ENCODE measurements at regions of chr3 and their contacts with region 1.

Region 1: DNA sequence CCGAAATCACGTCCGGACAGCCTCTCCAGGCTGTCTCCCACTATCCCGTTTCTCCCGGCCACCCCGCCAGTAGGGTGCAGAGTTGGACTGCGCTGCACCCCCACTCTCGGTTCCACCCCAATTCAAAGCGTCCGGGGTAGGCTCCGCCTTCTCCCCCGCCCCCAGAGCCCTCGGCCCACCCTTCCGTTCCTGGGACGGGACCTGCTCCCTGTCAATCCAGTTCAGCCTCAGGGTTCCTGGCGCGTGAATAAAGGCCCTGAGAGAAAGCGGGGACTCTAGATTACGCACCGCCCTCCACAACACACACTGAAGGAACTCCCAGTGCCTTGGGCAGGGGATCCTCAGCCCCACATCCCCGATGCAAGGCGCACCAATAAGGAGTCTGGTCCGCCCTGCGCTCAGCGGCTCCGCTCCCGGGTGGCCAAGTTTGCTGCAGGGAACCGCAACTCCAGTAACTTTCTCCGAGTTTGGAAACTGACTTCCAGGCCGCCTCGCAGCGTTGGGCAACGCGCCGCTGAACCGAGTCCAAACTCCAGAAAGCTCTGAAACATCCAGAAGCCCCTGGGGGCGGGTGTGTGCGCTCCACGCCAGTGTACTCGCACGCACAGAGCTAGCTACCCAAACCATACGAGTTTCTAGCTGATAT is 1.9 kb downstream of the ADAMTS9 start:
- DNase-seq: peak; percentile 93
- ATAC-seq: peak; percentile 93

Region 2: GRCh38 chr3:64612082-64612860 is 73.7 kb before region 1 on chr3:
- intact Hi-C with region 1: loop called (anchors 5 kb)
- DNase-seq: no peak
- ATAC-seq: peak; percentile 97

Region 3: GRCh38 chr3:64696896-64697295 is 11.0 kb after region 1 on chr3:
- intact Hi-C with region 1: no loop called
- DNase-seq: no peak
- ATAC-seq: no peak

Region 4: GRCh38 chr3:64901522-64901885 is 215.6 kb after region 1 on chr3:
- intact Hi-C with region 1: loop called (anchors 2 kb)
- DNase-seq: no peak
- ATAC-seq: peak; percentile 81

Region 5: DNA sequence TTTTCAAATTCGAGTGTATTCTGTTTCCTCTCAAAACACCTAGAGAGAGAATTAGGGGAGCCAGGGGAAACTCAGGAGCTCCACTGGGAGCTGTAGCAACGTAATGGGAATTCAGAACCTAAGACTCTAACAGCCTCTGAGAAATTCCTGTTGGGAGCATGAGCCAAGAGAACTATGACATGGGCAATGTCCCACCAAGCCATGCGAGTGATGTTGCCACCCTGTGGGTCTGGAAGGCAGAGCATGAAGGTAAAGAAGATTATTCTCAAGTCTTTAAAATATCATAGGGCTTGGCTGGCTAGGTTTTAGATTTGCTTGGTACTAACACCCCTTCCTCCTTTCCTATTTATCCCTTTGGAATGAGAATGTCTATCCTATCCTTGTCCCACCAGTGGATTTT is 394.5 kb after region 1 on chr3:
- intact Hi-C with region 1: loop called (anchors 1 kb)
- DNase-seq: no peak
- ATAC-seq: no peak

Region 6: DNA sequence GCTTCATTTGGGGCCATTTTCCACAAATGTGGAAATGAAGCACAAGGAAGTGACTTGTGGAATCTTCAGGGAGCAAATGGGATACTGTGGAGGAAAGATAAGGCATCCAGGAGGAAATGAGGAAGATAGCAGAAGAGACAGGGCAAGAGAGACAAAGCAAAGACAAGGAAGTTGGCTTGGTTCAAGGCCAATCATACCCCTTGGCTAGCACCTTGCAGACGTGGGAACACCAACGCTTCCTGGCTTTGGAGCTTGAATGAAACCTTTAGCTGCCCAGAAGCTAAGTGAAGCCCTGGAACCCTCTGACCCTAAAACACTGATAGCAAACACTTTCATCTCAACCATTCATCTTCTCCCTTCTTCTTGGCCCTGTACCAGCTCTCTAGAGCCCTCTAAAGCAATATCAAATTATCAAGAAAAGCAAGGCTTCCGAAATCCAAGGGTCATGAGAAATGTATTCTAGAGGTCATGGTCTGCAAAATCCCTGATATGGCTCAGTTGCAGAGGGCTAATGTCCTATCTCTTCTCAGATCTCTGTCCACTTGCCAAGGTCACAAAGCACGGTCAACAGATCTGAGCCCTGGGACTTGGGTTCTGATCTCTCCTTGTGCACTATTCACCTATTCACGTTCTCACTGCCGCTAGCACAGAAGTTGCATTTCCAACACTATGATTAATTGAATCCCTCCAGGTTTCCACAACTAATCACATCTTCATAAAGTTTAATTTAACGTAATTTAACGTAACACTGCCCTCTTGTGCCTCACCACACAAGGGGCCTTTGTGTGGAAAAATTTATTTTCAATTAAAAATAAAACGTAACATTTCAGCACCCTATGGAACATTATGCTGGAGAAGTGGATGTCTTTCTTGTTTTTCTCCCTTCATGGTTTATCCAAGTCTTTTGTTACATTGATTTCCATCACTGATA is 559.5 kb after region 1 on chr3:
- intact Hi-C with region 1: loop called (anchors 10 kb)
- DNase-seq: no peak
- ATAC-seq: no peak